Vagina (tissue), 2 donors: ENCODE measurements at regions of chr12 and their contacts with region 1.

Region 1: GRCh38 chr12:98593351-98594049 is at the start of gene SLC25A3:
- DNase-seq: peak; percentile 98 to 99
- H3K4me3 ChIP-seq: peak within 1 kb of the TSS; percentile 73 to 99
- H3K27ac ChIP-seq: peak within 1 kb of the TSS; percentile 99
- H3K4me1 ChIP-seq: peaks cover 18% of the 10 kb centered on the region
- H3K27me3 ChIP-seq: no peaks in the 10 kb centered on the region
- CTCF ChIP-seq: no peak
- POLR2A ChIP-seq: peak in 1 of 2 donors; percentile 92
- total RNA-seq, gene SLC25A3: 281 TPM

Region 2: GRCh38 chr12:98644711-98645402 is 51.4 kb after region 1 on chr12 and contains the starts of genes APAF1 and IKBIP:
- intact Hi-C with region 1: loop called (anchors 10 kb)
- DNase-seq: peak; percentile 97
- H3K4me3 ChIP-seq: peak within 1 kb of the TSS; percentile 86 to 95
- H3K27ac ChIP-seq: peak within 1 kb of the TSS; percentile 92
- H3K4me1 ChIP-seq: peaks cover 38% of the 10 kb centered on the region
- H3K27me3 ChIP-seq: no peaks in the 10 kb centered on the region
- CTCF ChIP-seq: no peak
- POLR2A ChIP-seq: peak in 1 of 2 donors; percentile 70
- total RNA-seq, gene APAF1: 12.8 TPM
- total RNA-seq, gene IKBIP: 7.6 TPM

Region 3: GRCh38 chr12:98922871-98923270 is 329.4 kb after region 1 on chr12:
- intact Hi-C with region 1: no loop called
- DNase-seq: no peak
- H3K4me3 ChIP-seq: no peak overlapping the region
- H3K27ac ChIP-seq: no peak overlapping the region
- H3K4me1 ChIP-seq: no peaks in the 10 kb centered on the region
- H3K27me3 ChIP-seq: no peaks in the 10 kb centered on the region
- CTCF ChIP-seq: no peak
- POLR2A ChIP-seq: no peak

Region 4: GRCh38 chr12:99627459-99627858 is 1034.0 kb after region 1 on chr12:
- intact Hi-C with region 1: no loop called
- DNase-seq: no peak
- H3K4me3 ChIP-seq: no peak overlapping the region
- H3K27ac ChIP-seq: no peak overlapping the region
- H3K4me1 ChIP-seq: no peaks in the 10 kb centered on the region
- H3K27me3 ChIP-seq: no peaks in the 10 kb centered on the region
- CTCF ChIP-seq: no peak
- POLR2A ChIP-seq: no peak